Caco-2 (cell line): ENCODE measurements at regions of chr12 and their contacts with region 1.

Region 1: GRCh38 chr12:6533923-6534694 is at the start of gene GAPDH:
- DNase-seq: peak; percentile 98 to 99
- H3K4me3 ChIP-seq: peak within 1 kb of the TSS; percentile 93
- H3K4me3 Mint-ChIP-seq: peak within 1 kb of the TSS; percentile 91
- H3K27ac Mint-ChIP-seq: peak within 1 kb of the TSS; percentile 97
- H3K4me1 ChIP-seq: peaks cover 36% of the 10 kb centered on the region
- H3K4me1 Mint-ChIP-seq: peaks cover 46% of the 10 kb centered on the region
- H3K27me3 ChIP-seq: no peaks in the 10 kb centered on the region
- H3K27me3 Mint-ChIP-seq: no peaks in the 10 kb centered on the region
- CTCF ChIP-seq: no peak
- total RNA-seq, gene GAPDH: 4,975 and 5,337 TPM in 2 replicates

Region 2: DNA sequence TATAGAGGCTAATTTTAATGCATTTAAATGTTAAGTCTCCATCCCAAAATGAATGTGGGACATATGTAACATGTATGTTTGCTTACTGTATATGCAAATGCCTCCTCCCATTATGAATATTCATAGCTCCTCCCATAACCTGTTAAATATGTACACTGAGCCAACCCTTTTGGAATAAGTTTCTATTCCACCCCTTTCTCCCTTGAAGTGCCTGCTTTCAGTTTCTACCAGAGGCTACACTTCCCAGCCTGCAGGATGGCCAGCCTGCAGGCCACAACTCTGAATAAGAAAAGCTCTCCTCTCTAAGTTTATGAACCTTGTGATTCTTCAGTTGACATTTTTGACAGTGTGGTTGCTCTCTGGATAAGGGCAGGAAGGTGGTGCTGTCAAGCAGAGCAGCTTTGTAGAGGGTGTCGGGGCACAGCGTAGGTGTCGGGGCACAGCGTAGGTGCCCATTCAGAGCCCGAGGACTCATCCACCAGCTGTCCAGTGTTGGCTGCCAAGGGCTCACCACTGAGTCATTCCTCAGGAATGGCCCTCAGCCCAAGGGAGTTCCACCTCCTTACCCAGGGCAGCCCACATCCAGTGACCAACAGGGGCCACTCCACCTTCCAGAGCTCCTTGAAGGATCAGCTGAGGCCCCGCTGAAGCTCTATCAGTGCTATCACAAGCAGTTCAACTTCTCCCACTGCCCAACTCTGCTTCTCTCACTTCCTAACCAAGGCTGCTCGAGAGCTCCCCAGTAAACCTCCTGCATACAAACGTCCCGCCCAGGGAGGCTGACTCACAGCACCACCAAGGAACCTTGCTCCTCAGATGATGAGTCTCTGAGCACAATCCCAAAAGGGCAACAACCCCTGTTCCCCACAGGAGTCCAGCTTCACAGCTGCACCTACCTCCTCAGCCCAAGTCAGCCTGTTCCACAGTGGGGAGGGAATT is 441.1 kb before region 1 on chr12:
- CTCF ChIA-PET with region 1: no interaction called
- POLR2A ChIA-PET with region 1: no interaction called
- intact Hi-C with region 1: no loop called
- DNase-seq: peak; percentile 58 to 78
- H3K4me3 ChIP-seq: no peak overlapping the region
- H3K4me3 Mint-ChIP-seq: no peak overlapping the region
- H3K27ac Mint-ChIP-seq: peak overlapping the region; percentile 87
- H3K4me1 ChIP-seq: peaks cover 38% of the 10 kb centered on the region
- H3K4me1 Mint-ChIP-seq: peaks cover 26% of the 10 kb centered on the region
- H3K27me3 ChIP-seq: no peaks in the 10 kb centered on the region
- H3K27me3 Mint-ChIP-seq: no peaks in the 10 kb centered on the region
- CTCF ChIP-seq: no peak

Region 3: GRCh38 chr12:6355491-6356371 is 178.4 kb before region 1 on chr12:
- CTCF ChIA-PET with region 1: interaction called, 3 read pairs
- POLR2A ChIA-PET with region 1: interaction called, 11 read pairs
- intact Hi-C with region 1: no loop called
- DNase-seq: peak; percentile 62 to 74
- H3K4me3 ChIP-seq: no peak overlapping the region
- H3K4me3 Mint-ChIP-seq: no peak overlapping the region
- H3K27ac Mint-ChIP-seq: no peak overlapping the region
- H3K4me1 ChIP-seq: peaks cover 10% of the 10 kb centered on the region
- H3K4me1 Mint-ChIP-seq: peaks cover 8% of the 10 kb centered on the region
- H3K27me3 ChIP-seq: no peaks in the 10 kb centered on the region
- H3K27me3 Mint-ChIP-seq: no peaks in the 10 kb centered on the region
- CTCF ChIP-seq: peak; percentile 24 to 48

Region 4: DNA sequence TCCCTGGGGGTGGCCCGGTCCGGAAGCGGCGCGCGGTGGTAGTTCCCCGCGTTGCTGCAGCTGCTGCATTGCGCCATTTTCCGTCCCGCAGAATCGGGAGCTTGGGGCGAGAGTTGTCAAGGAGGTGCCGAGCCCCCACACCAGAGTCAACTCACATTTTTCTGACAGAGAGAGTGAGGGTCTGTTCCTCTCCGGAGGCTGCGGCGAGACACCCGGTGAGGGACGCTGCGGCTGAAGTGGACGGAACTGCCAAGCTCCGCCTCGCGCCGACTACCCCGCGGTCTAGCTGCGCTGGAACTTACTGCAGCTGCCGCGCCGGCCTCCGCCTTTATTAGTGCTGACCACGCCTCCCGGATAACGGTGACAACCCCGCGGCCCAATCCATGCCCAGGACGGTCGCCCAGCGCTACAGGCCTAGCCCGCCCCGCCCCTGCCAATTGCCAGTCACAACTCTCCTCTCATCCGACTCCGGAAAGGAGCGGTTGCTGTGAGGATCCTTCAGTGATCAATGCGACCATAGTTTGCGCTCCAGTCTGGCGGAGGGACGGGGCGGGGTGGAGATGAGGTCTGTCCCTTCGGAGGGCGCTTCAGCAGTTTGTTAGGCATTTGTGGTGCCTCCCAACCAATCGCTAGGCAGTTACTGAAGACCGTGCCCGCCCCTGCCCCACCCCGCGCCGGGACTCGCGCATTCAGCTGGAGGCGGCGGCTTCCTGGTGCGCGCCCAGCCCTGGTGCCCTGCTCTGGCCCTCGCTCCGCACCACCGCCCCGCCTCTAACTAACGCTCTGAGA is 63.5 kb before region 1 on chr12 and contains the start of gene VAMP1:
- CTCF ChIA-PET with region 1: interaction called, 19 read pairs
- POLR2A ChIA-PET with region 1: interaction called, 57 read pairs
- intact Hi-C with region 1: loop called (anchors 1 kb)
- DNase-seq: peak; percentile 99 to 100
- H3K4me3 ChIP-seq: peak within 1 kb of the TSS; percentile 86
- H3K4me3 Mint-ChIP-seq: peak within 1 kb of the TSS; percentile 78
- H3K27ac Mint-ChIP-seq: peak within 1 kb of the TSS; percentile 64
- H3K4me1 ChIP-seq: no peaks in the 10 kb centered on the region
- H3K4me1 Mint-ChIP-seq: peaks cover 6% of the 10 kb centered on the region
- H3K27me3 ChIP-seq: no peaks in the 10 kb centered on the region
- H3K27me3 Mint-ChIP-seq: no peaks in the 10 kb centered on the region
- CTCF ChIP-seq: no peak
- total RNA-seq, gene VAMP1: 8.4 and 9.7 TPM in 2 replicates

Region 5: DNA sequence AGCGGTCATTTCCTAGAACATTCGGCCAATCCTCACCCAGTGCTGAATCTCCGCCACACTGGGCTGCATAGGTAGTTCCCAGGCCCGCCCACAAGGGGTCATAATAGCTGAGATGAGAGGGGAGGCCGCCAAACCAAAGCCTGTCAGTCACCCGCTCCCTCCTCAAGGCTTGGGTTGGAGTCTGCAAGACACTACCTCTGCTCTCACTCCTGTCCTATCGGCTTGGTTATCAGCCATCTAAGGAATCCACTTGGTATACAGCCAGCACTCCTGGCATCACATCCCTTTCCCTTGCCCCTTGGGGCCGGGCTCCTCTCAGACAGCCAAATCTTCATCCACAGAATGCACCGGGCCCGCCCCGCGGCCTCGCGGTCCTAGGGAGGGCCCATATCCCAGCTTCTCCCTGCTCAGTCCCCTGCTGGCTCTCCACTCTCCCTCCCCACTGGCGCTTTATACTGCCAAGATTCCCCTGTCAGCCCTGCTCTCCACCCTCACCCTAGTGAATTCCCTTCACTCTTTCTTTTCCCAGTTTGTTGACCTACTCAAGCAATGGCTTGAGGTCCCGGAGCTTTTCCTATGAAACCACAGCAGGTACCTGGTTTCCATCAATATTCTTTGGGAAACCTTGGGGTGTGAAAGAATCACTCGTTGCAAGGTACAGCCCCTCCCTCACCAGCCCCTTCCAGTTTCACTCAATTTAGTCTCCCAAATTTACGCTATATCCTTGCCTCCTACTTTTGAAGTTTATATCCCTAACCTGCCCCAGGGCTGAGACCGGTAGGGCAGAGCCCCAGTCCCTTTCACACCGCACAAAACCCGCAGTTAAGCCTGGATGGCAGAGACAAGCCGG is 20.3 kb after region 1 on chr12:
- CTCF ChIA-PET with region 1: interaction called, 16 read pairs
- POLR2A ChIA-PET with region 1: interaction called, 31 read pairs
- intact Hi-C with region 1: no loop called
- DNase-seq: peak; percentile 87 to 91
- H3K4me3 ChIP-seq: no peak overlapping the region
- H3K4me3 Mint-ChIP-seq: no peak overlapping the region
- H3K27ac Mint-ChIP-seq: no peak overlapping the region
- H3K4me1 ChIP-seq: peaks cover 7% of the 10 kb centered on the region; the same call in 1 of the 2 replicates
- H3K4me1 Mint-ChIP-seq: no peaks in the 10 kb centered on the region
- H3K27me3 ChIP-seq: no peaks in the 10 kb centered on the region
- H3K27me3 Mint-ChIP-seq: no peaks in the 10 kb centered on the region
- CTCF ChIP-seq: peak; percentile 78 to 84

Region 6: GRCh38 chr12:6620137-6620884 is 86.2 kb after region 1 on chr12:
- CTCF ChIA-PET with region 1: no interaction called
- POLR2A ChIA-PET with region 1: no interaction called
- intact Hi-C with region 1: no loop called
- DNase-seq: no peak
- H3K4me3 ChIP-seq: no peak overlapping the region
- H3K4me3 Mint-ChIP-seq: no peak overlapping the region
- H3K27ac Mint-ChIP-seq: no peak overlapping the region
- H3K4me1 ChIP-seq: no peaks in the 10 kb centered on the region
- H3K4me1 Mint-ChIP-seq: no peaks in the 10 kb centered on the region
- H3K27me3 ChIP-seq: no peaks in the 10 kb centered on the region
- H3K27me3 Mint-ChIP-seq: no peaks in the 10 kb centered on the region
- CTCF ChIP-seq: no peak

Region 7: DNA sequence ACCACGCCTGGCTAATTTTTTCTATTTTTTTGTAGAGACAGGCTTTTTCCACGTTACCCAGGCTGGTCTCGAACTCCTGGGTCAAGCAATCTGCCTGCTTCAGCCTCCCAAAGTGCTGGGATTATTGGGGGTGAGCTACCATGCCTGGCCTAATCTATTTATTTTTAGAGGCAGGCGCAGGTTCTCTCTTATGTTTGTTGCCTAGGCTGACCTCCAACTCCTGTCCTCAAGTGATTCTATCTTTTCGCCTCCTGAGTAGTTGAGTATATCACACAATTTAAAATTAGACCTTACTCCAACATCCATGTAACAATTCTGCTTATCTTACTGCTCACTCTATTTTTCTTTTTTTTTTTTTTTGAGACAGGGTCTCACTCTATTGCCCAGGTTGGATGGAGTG is 119.9 kb after region 1 on chr12:
- CTCF ChIA-PET with region 1: no interaction called
- POLR2A ChIA-PET with region 1: no interaction called
- intact Hi-C with region 1: no loop called
- DNase-seq: no peak
- H3K4me3 ChIP-seq: no peak overlapping the region
- H3K4me3 Mint-ChIP-seq: no peak overlapping the region
- H3K27ac Mint-ChIP-seq: no peak overlapping the region
- H3K4me1 ChIP-seq: no peaks in the 10 kb centered on the region
- H3K4me1 Mint-ChIP-seq: no peaks in the 10 kb centered on the region
- H3K27me3 ChIP-seq: no peaks in the 10 kb centered on the region
- H3K27me3 Mint-ChIP-seq: no peaks in the 10 kb centered on the region
- CTCF ChIP-seq: no peak

Region 8: DNA sequence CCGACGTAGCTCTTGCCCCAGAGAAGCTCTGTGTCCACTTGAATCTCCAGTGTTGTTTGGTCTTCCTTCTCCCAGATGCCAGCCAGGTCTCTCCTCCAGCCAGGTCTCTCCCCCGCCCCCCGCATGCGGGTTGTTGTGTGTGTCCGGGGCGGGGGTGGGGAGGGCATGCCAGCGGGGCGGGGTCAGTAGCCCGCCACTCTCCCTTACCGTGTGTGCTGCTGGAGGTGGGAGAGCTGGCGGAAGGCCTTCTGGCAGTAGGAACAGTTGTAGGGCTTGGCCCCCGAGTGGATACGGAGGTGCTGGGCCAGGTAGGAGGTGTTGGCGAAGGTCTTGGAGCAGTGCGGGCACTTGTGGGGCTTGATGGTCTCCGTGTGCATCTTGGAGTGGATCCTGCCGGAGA is 138.0 kb after region 1 on chr12:
- CTCF ChIA-PET with region 1: no interaction called
- POLR2A ChIA-PET with region 1: interaction called, 10 read pairs
- intact Hi-C with region 1: no loop called
- DNase-seq: no peak
- H3K4me3 ChIP-seq: no peak overlapping the region
- H3K4me3 Mint-ChIP-seq: no peak overlapping the region
- H3K27ac Mint-ChIP-seq: no peak overlapping the region
- H3K4me1 ChIP-seq: no peaks in the 10 kb centered on the region
- H3K4me1 Mint-ChIP-seq: no peaks in the 10 kb centered on the region
- H3K27me3 ChIP-seq: no peaks in the 10 kb centered on the region; the same call in 1 of the 2 replicates
- H3K27me3 Mint-ChIP-seq: no peaks in the 10 kb centered on the region
- CTCF ChIP-seq: no peak

Region 9: DNA sequence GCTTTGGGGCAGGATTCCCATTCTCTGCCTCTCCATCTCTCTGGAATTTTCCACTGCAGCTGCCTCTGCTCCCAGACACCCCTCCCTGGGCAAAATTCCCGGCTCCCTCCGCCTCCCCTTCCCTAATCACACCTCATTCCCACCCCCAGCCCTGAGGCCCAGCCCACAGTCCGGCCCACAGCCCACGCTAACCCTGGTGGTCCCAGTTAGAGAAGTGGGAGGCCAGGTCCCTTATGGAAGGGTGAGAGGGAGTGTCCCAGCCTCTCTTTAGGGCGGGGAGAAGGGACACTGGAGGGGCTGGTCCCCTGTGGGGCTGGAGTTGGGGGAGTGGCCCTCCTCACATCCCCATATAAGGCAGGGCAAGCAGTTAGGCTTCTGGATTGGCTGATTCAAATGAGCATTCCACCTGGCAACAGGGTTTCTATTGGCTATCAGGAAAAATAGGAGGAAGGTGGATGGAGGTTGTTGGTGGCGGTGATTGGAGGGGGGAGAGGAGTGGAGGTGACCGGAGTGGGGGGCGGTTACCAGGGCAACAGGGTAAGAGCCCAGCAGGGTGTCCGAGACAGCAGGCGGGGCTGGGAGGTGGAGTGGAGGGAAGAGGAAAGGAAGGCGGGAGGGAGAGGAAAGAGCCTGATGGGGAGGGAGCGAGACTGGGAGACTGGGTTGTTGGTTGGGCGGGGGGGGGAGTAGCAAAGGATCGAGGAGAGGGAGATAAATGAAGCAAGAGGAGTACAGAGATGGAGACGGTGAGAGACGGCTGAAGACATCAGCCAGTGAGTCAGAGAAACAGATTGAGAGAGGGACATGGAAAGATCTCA is 230.1 kb after region 1 on chr12:
- CTCF ChIA-PET with region 1: no interaction called
- POLR2A ChIA-PET with region 1: interaction called, 32 read pairs
- intact Hi-C with region 1: no loop called
- DNase-seq: peak; percentile 89 to 95
- H3K4me3 ChIP-seq: peak overlapping the region; percentile 10; the same call in 1 of the 2 replicates
- H3K4me3 Mint-ChIP-seq: peak overlapping the region; percentile 71
- H3K27ac Mint-ChIP-seq: peak overlapping the region; percentile 79
- H3K4me1 ChIP-seq: peaks cover 54% of the 10 kb centered on the region
- H3K4me1 Mint-ChIP-seq: peaks cover 53% of the 10 kb centered on the region
- H3K27me3 ChIP-seq: no peaks in the 10 kb centered on the region
- H3K27me3 Mint-ChIP-seq: no peaks in the 10 kb centered on the region
- CTCF ChIP-seq: no peak